AG04450 (cell line): ENCODE measurements at regions of chr12 and their contacts with region 1.

Region 1: DNA sequence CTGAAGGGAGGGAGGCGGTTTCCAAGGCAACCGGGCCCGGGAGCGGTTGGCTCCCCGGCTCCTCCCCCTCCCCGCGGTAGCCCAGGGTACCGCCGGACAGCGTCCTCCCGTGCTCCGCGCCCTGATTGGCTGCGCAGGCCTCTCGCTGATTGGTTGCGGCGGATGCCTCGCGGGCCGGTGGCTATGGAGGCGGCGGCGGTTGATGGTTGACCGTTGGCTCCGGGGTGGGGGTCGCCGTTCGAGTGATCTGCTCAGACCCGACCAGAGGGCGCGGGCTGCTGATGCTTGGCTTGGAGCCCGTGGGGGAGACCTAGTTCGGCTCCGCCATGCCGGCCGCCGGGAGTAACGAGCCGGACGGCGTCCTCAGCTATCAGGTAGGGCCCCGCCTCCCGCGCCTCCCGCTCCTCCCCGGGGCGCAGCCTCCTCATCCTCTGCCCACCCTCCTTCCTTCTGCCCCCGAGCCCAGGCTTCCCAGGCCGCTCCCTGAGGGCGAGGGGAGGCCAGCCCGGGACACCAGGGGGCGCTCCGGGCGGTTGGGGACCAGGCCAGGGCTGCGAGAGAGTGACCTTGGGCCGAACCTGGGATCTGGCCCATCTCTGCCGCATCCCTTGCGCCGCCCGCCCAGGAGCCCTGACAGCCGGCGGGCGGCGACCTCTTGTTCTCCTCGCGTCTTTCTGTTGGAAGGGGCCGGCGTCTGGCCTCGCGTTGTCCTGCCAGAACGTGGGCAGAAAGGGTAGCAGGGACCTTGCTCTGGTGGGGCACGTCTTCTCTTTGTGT is at the start of gene SLC4A8:
- DNase-seq: peak; percentile 66
- H3K4me3 ChIP-seq: peak within 1 kb of the TSS; percentile 83
- H3K27ac ChIP-seq: no peak within 1 kb of the TSS
- H3K27me3 ChIP-seq: no peaks in the 10 kb centered on the region
- CTCF ChIP-seq: peak; percentile 83
- polyA plus RNA-seq, gene SLC4A8: 6.6 and 6.9 TPM in 2 replicates

Region 2: DNA sequence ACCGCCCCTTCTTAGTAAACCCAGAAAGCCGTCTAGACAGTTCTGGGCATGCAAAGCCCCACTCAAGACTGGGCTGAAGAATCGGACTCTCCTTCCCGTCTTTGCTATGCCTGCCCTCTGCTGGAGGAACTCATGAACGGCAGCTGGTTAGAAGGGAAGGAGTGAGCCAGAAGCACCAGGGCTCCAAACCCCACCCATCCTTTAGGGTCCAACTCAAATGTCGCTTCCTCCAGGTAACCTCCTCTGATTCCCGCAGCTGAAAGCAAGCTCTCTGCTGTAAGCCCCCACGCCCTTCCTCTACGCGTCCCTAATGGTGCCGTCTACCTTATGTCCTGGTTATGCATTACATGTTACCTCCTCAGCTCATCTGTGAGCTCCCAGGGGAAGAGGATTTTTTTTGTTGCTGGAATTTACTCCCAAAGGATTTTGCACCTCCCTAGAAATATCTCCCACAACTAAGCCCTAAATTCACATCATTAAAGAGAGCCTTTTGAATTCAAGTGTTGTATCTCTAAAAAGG is 107.2 kb after region 1 on chr12:
- CTCF ChIA-PET with region 1: interaction called, 142 read pairs
- POLR2A ChIA-PET with region 1: no interaction called
- DNase-seq: peak; percentile 48
- H3K4me3 ChIP-seq: no peak overlapping the region
- H3K27ac ChIP-seq: no peak overlapping the region
- H3K27me3 ChIP-seq: no peaks in the 10 kb centered on the region
- CTCF ChIP-seq: peak; percentile 94

Region 3: GRCh38 chr12:51823875-51824565 is 399.2 kb after region 1 on chr12:
- CTCF ChIA-PET with region 1: interaction called, 55 read pairs
- POLR2A ChIA-PET with region 1: no interaction called
- DNase-seq: peak; percentile 24
- H3K4me3 ChIP-seq: no peak overlapping the region
- H3K27ac ChIP-seq: no peak overlapping the region
- H3K27me3 ChIP-seq: no peaks in the 10 kb centered on the region
- CTCF ChIP-seq: peak; percentile 59

Region 4: DNA sequence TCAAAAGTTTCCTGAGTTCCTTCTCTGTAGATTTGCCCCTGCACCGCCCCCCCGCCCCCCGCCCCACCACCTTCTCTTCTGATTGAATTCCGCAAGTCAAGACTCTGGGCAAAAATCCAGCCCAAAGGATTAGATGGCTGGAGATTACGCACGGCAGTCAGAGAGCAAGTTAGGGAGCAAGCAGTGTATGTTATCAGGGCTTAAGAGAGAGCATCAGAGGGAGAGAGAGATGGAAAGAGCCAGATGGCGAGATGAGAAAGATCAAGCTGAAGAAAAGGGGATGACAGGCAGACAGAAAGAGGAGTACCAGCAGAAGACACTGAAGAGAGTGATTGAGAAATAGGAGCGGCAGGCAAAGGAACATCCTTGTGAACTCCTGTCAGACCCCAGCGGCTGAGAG is 449.2 kb after region 1 on chr12:
- CTCF ChIA-PET with region 1: interaction called, 28 read pairs
- POLR2A ChIA-PET with region 1: no interaction called
- DNase-seq: no peak
- H3K4me3 ChIP-seq: no peak overlapping the region
- H3K27ac ChIP-seq: no peak overlapping the region
- H3K27me3 ChIP-seq: peaks cover 3% of the 10 kb centered on the region
- CTCF ChIP-seq: no peak